Stomach (tissue), 19 donors: ENCODE measurements at regions of chr7 and their contacts with region 1.

Region 1: GRCh38 chr7:103148994-103149807 is at the start of gene NAPEPLD:
- DNase-seq: peak; percentile 89 to 95
- H3K4me3 ChIP-seq: peak within 1 kb of the TSS; percentile 64 to 87 (median 68)
- H3K27ac ChIP-seq: peak within 1 kb of the TSS; percentile 94 to 98 (median 96)
- H3K4me1 ChIP-seq: peaks cover 4 to 47% (median 33%) of the 10 kb centered on the region in 4 donors
- H3K27me3 ChIP-seq: no peaks in the 10 kb centered on the region
- CTCF ChIP-seq: no peak
- EP300 ChIP-seq: no peak
- POLR2A ChIP-seq: no peak
- total RNA-seq, gene NAPEPLD: 17.0 to 84.9 (median 40.2) TPM

Region 2: DNA sequence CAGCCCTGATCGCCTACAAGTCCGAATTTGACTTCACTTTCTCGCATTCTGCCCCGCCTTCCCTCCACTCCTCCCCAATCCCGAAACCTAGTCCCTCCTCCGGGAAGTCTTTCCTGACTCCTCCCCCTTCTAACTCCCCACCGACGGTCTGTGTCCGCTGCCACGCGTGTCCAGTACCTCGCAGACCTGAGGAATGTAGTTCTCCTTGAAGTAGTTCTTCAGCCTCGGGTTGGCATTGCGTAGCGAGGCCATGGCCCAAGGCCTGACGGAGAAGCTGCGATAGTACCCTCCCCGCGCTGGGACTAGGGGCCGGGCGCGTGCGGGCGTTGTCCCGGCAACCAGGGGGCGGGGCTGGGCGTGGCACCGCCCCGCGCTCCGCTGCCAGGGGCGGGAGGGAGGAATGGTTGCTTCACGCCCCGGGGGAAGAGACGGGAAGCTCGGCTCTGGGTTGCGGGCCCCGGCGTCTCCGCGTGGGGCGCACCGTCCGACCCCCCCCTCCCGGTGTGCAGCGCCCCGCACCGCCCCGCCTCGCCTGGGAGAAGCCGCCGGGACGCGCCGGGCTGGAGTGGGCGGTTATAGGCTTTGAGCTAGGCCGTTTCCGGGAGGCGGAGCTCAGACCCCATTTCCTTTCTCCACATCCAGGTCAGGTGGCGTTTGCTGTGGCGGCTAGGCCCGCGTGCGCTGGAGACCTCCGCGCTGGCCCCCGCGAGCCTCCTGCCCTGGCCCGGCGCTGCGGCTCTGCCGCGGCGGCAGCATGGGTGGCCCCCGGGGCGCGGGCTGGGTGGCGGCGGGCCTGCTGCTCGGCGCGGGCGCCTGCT is 74.5 kb before region 1 on chr7 and contains the starts of genes ARMC10 and FBXL13:
- intact Hi-C with region 1: loop called (anchors 10 kb)
- DNase-seq: peak; percentile 89 to 97
- H3K4me3 ChIP-seq: peak within 1 kb of the TSS; percentile 65 to 87 (median 78)
- H3K27ac ChIP-seq: peak within 1 kb of the TSS; percentile 92 to 98 (median 96)
- H3K4me1 ChIP-seq: peaks cover 10 to 40% (median 28%) of the 10 kb centered on the region in 4 donors
- H3K27me3 ChIP-seq: no peaks in the 10 kb centered on the region
- CTCF ChIP-seq: peak in 2 of 7 experiments; percentile 17 to 30
- EP300 ChIP-seq: peak; percentile 7
- POLR2A ChIP-seq: no peak
- total RNA-seq, gene ARMC10: 1.8 to 118 (median 38.8) TPM
- total RNA-seq, gene FBXL13: 5.8 to 25.3 (median 10.8) TPM in 4 of 5 donors, not detected in the other